ENCODE measurements at regions of chr16 and their contacts with region 1.

Region 1: DNA sequence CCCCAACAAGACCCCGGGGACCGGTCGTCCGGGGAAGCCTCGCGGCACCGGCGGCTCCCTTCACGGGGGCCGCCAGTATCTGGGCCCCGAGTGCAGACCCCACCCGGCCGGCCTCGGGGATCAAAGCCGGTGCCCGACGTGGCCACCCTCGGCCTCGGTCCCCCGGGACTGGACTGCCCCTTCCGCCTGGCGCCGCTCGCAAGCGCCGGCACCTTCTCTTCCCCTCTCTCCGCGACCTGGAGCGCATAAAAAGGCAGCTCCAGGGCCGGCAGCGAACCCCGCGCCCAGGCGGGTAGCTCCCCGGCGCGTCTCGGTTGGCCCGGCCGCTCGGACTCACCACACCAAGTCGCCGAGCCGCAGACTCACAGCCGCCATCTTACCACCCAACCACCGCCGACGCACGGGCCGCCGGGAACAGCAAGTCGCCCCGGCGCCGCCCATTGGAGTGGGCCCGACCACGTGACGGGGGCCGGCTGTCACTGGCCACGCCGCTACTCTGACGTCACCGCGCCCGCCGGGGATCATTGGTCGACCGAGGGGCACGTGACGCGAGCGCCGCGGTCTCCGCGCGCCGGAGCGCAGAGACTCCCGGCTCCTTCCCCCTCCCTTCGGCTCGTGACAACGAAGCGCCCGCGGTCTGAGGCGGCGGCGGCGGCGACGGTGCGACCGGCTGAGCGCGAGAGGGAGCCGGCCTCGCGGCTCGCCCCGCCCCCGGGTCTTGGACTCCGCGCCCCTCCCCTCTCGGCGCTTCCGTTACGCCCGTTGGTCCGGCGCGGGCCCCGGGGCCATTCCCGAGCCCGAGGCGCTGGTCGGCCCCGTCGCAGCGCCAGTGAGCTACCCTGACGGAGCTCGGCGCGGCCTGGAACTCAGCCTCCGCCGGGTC is at the starts of genes GLYR1 and UBN1:
- DNase-seq: peak; percentile 98 to 100 (median 100)
- ATAC-seq: peak; percentile 91
- H3K4me3 ChIP-seq: peak within 1 kb of the TSS; percentile 79 to 89
- H3K4me3 Mint-ChIP-seq: peak within 1 kb of the TSS; percentile 91
- H3K27ac ChIP-seq: peak within 1 kb of the TSS; percentile 92 to 95
- H3K27ac Mint-ChIP-seq: peak within 1 kb of the TSS; percentile 96
- H3K4me1 ChIP-seq: peaks cover 38% of the 10 kb centered on the region
- H3K4me1 Mint-ChIP-seq: peaks cover 60% of the 10 kb centered on the region
- H3K27me3 ChIP-seq: no peaks in the 10 kb centered on the region
- H3K27me3 Mint-ChIP-seq: no peaks in the 10 kb centered on the region
- CTCF ChIP-seq: no peak
- total RNA-seq, gene GLYR1: 71.8 to 76.7 TPM
- total RNA-seq, gene UBN1: 57.1 to 65.3 TPM

Region 2: GRCh38 chr16:3161136-3162018 is 1685.8 kb before region 1 on chr16:
- CTCF ChIA-PET with region 1: no interaction called
- POLR2A ChIA-PET with region 1: no interaction called
- intact Hi-C with region 1: no loop called
- DNase-seq: no peak
- ATAC-seq: no peak
- H3K4me3 ChIP-seq: no peak overlapping the region
- H3K4me3 Mint-ChIP-seq: peak overlapping the region; percentile 11
- H3K27ac ChIP-seq: no peak overlapping the region
- H3K27ac Mint-ChIP-seq: no peak overlapping the region
- H3K4me1 ChIP-seq: peaks cover 29% of the 10 kb centered on the region
- H3K4me1 Mint-ChIP-seq: peaks cover 23% of the 10 kb centered on the region
- H3K27me3 ChIP-seq: no peaks in the 10 kb centered on the region
- H3K27me3 Mint-ChIP-seq: no peaks in the 10 kb centered on the region
- CTCF ChIP-seq: no peak

Region 3: GRCh38 chr16:4734063-4734729 is 112.9 kb before region 1 on chr16 and contains the starts of genes ANKS3 and DNAAF8:
- CTCF ChIA-PET with region 1: interaction called, 4 read pairs
- POLR2A ChIA-PET with region 1: interaction called, 5 read pairs
- intact Hi-C with region 1: loop called (anchors 1 to 2 kb)
- DNase-seq: peak; percentile 47 to 90 (median 79)
- ATAC-seq: peak; percentile 73
- H3K4me3 ChIP-seq: peak within 1 kb of the TSS; percentile 81 to 96
- H3K4me3 Mint-ChIP-seq: peak within 1 kb of the TSS; percentile 91
- H3K27ac ChIP-seq: peak within 1 kb of the TSS; percentile 69 to 75
- H3K27ac Mint-ChIP-seq: peak within 1 kb of the TSS; percentile 92
- H3K4me1 ChIP-seq: peaks cover 13% of the 10 kb centered on the region
- H3K4me1 Mint-ChIP-seq: peaks cover 17% of the 10 kb centered on the region
- H3K27me3 ChIP-seq: no peaks in the 10 kb centered on the region
- H3K27me3 Mint-ChIP-seq: no peaks in the 10 kb centered on the region
- CTCF ChIP-seq: no peak
- total RNA-seq, gene ANKS3: 8.6 to 11.8 TPM
- total RNA-seq, gene DNAAF8: not detected

Region 4: DNA sequence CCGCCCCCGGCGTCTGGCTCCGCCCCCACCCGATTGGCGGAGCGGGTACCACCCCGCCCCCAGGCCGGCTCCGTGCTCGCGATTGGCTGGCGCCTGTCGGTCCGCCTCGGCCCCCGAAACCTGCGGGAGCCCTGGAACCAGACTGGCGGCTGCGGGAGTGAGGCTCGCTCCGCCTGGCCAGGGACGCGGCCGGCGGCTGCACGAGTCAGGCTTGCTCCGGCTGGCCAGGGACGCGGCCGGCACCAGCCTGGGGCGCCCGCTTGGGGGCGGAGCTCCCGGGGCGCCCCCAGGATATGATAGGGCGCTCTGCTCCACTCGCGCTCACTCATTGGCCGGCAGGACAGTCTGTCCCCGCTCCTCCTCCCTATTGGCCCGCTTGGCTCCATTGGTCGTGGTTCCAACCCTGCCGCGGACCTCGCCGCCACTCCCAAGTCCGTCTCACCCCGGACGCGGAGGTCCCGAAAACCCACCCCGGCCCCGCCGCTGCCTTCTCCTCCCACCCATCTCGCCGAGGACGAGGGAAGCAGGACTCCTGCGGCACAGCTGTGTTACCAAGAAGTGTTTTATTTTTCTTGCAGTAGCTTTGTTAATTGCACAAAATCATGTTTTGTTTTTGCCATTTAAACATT is 44.4 kb before region 1 on chr16:
- CTCF ChIA-PET with region 1: no interaction called
- POLR2A ChIA-PET with region 1: no interaction called
- intact Hi-C with region 1: loop called (anchors 1 kb)
- DNase-seq: peak; percentile 79 to 95 (median 88)
- ATAC-seq: peak; percentile 86
- H3K4me3 ChIP-seq: peak overlapping the region; percentile 60 to 89
- H3K4me3 Mint-ChIP-seq: peak overlapping the region; percentile 87
- H3K27ac ChIP-seq: peak overlapping the region; percentile 25 to 77
- H3K27ac Mint-ChIP-seq: peak overlapping the region; percentile 74
- H3K4me1 ChIP-seq: peaks cover 14% of the 10 kb centered on the region
- H3K4me1 Mint-ChIP-seq: peaks cover 11% of the 10 kb centered on the region
- H3K27me3 ChIP-seq: no peaks in the 10 kb centered on the region
- H3K27me3 Mint-ChIP-seq: no peaks in the 10 kb centered on the region
- CTCF ChIP-seq: no peak

Region 5: DNA sequence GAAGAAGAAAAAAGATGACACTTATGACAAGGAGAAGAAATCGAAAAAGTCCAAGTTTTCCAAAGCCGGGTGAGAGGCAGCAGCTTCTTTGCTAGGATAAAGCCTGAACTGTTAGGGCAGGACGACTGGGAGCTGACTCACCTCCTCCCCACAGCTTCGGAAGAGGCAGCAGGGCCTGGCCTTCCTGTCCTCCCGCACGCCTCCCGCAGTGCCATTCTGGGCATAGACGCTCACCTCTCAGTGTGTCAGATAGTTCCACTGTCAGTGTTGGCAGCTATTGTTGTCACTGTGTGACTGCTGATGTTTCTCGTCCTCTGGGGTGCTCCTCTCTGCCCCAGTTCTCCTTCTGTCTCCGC is 12.7 kb after region 1 on chr16:
- CTCF ChIA-PET with region 1: no interaction called
- POLR2A ChIA-PET with region 1: no interaction called
- intact Hi-C with region 1: no loop called
- DNase-seq: no peak
- ATAC-seq: no peak
- H3K4me3 ChIP-seq: no peak overlapping the region
- H3K4me3 Mint-ChIP-seq: no peak overlapping the region
- H3K27ac ChIP-seq: no peak overlapping the region
- H3K27ac Mint-ChIP-seq: no peak overlapping the region
- H3K4me1 ChIP-seq: no peaks in the 10 kb centered on the region
- H3K4me1 Mint-ChIP-seq: peaks cover 21% of the 10 kb centered on the region
- H3K27me3 ChIP-seq: no peaks in the 10 kb centered on the region
- H3K27me3 Mint-ChIP-seq: no peaks in the 10 kb centered on the region
- CTCF ChIP-seq: no peak

Region 6: DNA sequence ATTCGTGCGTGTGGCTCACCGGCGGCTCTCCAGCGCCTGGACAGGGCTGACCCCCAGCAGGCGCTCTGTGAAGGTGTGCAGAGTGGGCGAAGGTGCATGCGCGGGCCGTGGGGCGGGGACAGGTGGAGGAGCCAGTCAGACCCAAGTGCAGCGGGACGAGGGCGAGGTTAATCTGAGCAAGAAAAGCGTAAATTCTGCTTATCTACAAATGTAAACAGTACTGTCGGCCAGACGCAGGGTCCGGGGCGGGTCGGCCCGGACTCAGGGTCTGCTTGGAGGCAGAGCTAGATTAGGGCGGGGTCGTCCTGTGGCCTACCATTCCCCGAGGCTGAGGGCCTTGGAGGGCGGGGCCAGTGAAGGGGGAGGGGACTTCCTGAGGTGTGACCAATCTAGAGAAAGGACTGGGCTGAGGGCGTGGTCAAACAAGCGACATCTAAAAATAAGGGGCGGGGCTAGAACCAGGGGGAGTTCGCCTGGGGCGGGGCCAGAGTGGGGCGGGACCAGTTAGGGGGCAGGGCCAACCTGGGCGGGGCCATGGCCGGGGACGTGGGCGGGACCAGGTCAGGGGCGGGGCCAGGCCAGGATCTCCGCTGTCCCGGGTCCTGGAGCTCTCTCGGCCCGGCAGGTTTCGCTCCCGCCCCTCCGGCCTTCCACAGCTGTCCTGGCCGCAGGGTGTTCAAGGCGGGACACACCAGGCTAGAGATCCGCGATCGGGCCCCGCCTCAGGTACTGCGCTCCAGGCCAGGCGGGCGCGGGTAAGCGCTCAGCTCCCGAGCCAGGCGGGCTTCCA is 110.8 kb after region 1 on chr16 and contains the start of gene SEC14L5:
- CTCF ChIA-PET with region 1: no interaction called
- POLR2A ChIA-PET with region 1: no interaction called
- intact Hi-C with region 1: loop called in 1 of 2 experiments (anchors 1 kb)
- DNase-seq: peak; percentile 72 to 92 (median 87)
- ATAC-seq: peak; percentile 98
- H3K4me3 ChIP-seq: peak within 1 kb of the TSS; percentile 40 to 70
- H3K4me3 Mint-ChIP-seq: peak within 1 kb of the TSS; percentile 82
- H3K27ac ChIP-seq: no peak within 1 kb of the TSS
- H3K27ac Mint-ChIP-seq: no peak within 1 kb of the TSS
- H3K4me1 ChIP-seq: peaks cover 15% of the 10 kb centered on the region
- H3K4me1 Mint-ChIP-seq: peaks cover 20% of the 10 kb centered on the region
- H3K27me3 ChIP-seq: peaks cover 6 to 22% of the 10 kb centered on the region in 2 experiments
- H3K27me3 Mint-ChIP-seq: peaks cover 55% of the 10 kb centered on the region
- CTCF ChIP-seq: no peak
- total RNA-seq, gene SEC14L5: not detected

Measured in CD8-positive, alpha-beta T cell (primary cell).